Activated CD8-positive, alpha-beta memory T cell treated with anti-CD3 and anti-CD28 coated beads, Interleukin-2, amount 10 ng/mL, durations not matched to agents 7 days and 5 days (primary cell): ENCODE measurements at regions of chr14 and their contacts with region 1.

Region 1: DNA sequence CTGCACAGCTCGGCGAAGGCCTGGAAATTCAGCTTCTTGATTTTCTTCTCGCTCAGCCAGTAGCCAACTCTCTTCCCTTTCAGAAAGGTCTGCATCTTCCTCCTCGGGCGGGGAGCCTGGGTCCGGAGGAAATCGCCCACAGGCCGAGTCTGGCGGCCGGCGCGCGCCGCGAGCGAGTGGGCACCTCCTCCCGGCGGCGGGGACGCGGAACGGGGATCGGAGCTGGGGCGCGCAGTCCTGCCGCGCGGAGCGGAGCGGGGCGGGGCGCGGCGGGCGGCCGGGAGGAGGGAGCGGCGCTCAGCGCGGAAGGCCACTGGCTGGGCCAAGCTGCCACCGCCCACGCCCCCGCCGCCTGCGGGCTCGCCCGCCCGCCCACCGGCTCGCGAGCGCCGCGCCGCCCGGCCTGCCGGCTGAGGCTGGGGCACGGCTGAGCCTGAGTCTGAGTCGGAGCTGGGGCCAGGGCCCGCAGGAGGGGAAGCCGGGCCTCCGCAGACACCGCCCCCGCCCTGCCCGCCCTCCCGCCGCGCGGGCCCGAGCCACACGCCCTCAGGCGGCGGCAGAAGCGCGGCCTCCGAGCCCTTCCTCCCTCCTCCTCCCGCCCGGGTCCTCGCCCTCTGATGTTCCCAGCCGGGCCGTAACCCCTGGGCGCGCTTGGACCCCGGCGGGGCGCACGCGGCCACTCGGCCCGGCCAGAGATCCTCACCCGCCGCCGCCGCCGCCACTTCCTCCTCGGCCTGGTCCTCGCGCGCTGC is 480 bp downstream of the ITPK1 start:
- DNase-seq: peak; percentile 88
- ATAC-seq: peak; percentile 79
- H3K4me3 Mint-ChIP-seq: peak overlapping the region; percentile 86
- H3K27ac Mint-ChIP-seq: peak overlapping the region; percentile 92
- H3K4me1 Mint-ChIP-seq: peaks cover 35% of the 10 kb centered on the region
- H3K27me3 Mint-ChIP-seq: no peaks in the 10 kb centered on the region

Region 2: DNA sequence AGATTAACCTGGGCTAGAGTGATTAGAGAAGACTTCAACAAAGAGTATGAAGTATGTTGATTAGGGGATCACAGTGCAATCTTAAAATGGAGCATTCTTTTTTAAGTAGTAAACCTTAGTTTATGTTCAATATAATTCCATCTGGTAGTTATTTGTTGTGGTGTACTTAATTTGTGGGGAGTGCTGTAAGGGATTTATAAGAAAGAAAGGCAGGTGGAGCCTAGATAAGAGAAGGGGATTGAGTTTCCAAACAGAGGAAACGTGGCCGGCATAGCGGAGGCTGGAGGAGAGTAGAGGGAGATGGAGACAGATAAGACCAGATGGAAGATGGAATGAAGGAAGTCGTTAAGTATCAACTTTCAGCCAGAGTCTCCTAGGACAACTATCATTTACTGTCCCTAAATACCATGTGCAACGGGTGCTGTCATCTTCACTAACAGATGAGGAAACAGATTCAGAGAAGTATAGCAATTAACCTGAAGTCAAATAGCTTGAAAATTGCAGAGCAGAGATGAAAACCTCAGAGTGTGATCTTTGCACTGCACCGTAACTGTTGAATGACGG is 283.0 kb before region 1 on chr14:
- CTCF ChIA-PET with region 1: no interaction called
- DNase-seq: no peak
- ATAC-seq: no peak
- H3K4me3 Mint-ChIP-seq: no peak overlapping the region
- H3K27ac Mint-ChIP-seq: no peak overlapping the region
- H3K4me1 Mint-ChIP-seq: no peaks in the 10 kb centered on the region
- H3K27me3 Mint-ChIP-seq: no peaks in the 10 kb centered on the region

Region 3: GRCh38 chr14:92951912-92952471 is 163.3 kb before region 1 on chr14:
- CTCF ChIA-PET with region 1: interaction called, 21 read pairs
- DNase-seq: peak; percentile 86
- ATAC-seq: peak; percentile 95
- H3K4me3 Mint-ChIP-seq: no peak overlapping the region
- H3K27ac Mint-ChIP-seq: peak overlapping the region; percentile 60
- H3K4me1 Mint-ChIP-seq: peaks cover 7% of the 10 kb centered on the region
- H3K27me3 Mint-ChIP-seq: no peaks in the 10 kb centered on the region

Region 4: DNA sequence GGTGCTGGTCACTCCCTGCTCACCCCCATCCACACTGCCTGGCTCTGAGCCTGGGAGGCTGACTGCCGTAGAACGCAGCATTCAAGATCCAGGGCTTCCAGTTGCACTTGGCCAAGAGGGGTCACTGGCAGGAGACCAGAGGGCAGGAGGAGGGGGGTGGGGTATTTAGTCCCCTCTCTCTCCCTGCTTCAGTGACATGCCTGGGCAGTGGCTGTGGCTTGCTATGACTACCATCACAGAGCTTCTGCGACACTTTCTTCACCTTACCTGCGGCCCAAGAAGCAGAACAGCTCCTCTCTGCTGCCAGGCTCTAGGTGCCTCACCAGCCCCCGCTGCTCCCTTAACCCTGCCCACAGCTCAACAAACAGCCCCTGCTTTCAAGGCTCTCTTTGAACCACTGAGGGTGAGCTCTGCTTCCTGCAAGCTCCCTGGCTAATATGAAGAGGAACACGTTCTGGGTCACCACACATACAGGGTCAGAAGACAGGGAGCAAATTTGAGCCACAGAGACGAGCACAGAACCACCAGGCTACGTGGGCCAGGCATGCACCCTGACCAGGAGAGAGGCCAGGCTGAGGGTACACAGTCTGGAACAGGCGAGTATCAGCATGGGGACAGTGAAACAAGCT is 55.2 kb before region 1 on chr14:
- CTCF ChIA-PET with region 1: interaction called, 40 read pairs
- DNase-seq: peak; percentile 57
- ATAC-seq: peak; percentile 59
- H3K4me3 Mint-ChIP-seq: peak overlapping the region; percentile 1
- H3K27ac Mint-ChIP-seq: peak overlapping the region; percentile 81
- H3K4me1 Mint-ChIP-seq: peaks cover 53% of the 10 kb centered on the region
- H3K27me3 Mint-ChIP-seq: no peaks in the 10 kb centered on the region

Region 5: GRCh38 chr14:93086441-93087055 is 28.7 kb before region 1 on chr14:
- CTCF ChIA-PET with region 1: interaction called, 24 read pairs
- DNase-seq: peak; percentile 68
- ATAC-seq: peak; percentile 65
- H3K4me3 Mint-ChIP-seq: no peak overlapping the region
- H3K27ac Mint-ChIP-seq: peak overlapping the region; percentile 79
- H3K4me1 Mint-ChIP-seq: peaks cover 63% of the 10 kb centered on the region
- H3K27me3 Mint-ChIP-seq: no peaks in the 10 kb centered on the region

Region 6: GRCh38 chr14:93132470-93133065 is 17.3 kb after region 1 on chr14:
- CTCF ChIA-PET with region 1: interaction called, 269 read pairs
- DNase-seq: peak; percentile 50
- ATAC-seq: peak; percentile 57
- H3K4me3 Mint-ChIP-seq: no peak overlapping the region
- H3K27ac Mint-ChIP-seq: no peak overlapping the region
- H3K4me1 Mint-ChIP-seq: no peaks in the 10 kb centered on the region
- H3K27me3 Mint-ChIP-seq: peaks cover 12% of the 10 kb centered on the region

Region 7: DNA sequence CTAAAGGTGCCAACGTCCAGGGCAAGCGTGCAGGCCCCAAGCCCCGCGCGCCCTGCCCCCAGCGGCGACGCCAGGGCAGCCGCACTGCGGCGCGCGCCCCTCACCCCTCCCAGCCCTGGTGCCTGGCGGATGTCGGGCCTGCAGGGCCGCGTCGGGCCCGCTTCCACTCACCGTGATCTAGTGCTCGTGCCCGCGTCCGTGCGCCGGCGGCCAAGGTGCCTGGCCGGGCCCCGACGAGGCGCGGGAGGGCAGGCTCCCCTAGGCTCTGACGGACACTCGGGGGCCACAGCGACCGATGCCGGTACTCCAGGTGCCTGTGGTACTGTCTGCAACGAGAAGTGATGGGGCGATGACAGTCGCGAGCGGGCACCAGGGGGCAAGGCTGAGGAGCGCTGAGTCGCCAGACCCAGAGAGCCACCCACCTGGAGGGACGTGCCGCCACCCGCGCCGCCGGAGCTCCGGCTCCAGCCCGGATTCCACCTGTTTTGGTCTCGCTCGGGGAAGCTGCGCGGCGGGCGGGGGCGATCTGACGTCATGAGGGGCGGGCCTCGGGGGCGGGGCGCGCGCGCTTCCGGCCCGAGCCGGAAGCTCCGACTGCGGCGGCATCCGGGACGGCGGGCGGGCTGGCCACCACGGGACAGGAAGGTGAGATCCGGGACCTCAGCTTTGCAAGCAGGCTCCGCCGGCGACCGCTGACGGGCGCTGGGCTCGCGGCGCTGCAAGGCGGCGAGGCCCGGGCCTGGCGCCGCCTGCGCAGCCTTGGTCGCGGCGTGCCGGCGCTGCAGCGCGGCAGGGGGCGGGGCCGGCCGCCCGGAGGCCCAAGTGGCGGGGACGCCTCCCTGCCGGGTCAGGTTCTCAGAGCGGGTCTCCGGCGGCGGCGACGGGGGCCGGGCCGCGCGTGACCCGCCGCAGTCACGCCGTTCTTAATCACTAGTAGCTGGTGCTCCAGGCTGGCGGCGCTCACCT is 69.4 kb after region 1 on chr14 and contains the starts of genes LYSET and MOAP1:
- CTCF ChIA-PET with region 1: interaction called, 17 read pairs
- DNase-seq: peak; percentile 95
- ATAC-seq: peak; percentile 90
- H3K4me3 Mint-ChIP-seq: peak within 1 kb of the TSS; percentile 90
- H3K27ac Mint-ChIP-seq: peak within 1 kb of the TSS; percentile 94
- H3K4me1 Mint-ChIP-seq: peaks cover 31% of the 10 kb centered on the region
- H3K27me3 Mint-ChIP-seq: no peaks in the 10 kb centered on the region
- total RNA-seq, gene LYSET: 6.3 to 9.7 TPM
- total RNA-seq, gene MOAP1: 18.2 to 19.5 TPM

Region 8: DNA sequence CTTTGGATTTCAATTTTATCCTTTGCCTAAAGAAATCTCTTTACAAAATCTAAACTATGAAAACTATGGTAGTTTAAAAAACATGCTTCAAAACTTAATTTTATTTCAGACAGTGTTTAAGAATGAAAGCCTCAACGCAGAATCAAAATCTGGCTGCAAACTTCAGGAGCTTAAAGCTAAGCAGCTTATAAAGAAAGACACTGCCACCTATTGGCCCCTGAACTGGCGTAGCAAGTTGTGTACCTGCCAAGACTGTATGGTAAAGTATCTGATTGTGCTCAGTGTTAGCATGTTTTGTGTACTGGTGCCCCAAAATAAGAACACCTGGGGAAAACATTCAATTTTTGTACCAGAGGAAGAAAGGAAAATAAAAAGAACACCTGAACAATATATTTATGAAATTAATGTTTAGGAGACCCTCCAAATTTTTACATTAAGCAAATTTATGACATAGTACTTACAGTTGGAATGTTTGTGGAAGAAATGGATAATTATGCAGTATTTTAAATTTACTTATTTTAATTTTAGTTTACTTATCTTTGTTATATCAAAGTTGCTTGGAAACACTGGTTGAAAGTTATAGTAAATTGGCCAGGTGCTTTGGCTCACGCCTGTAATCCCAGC is 104.0 kb after region 1 on chr14:
- CTCF ChIA-PET with region 1: interaction called, 18 read pairs
- DNase-seq: peak; percentile 67
- ATAC-seq: peak; percentile 91
- H3K4me3 Mint-ChIP-seq: no peak overlapping the region
- H3K27ac Mint-ChIP-seq: no peak overlapping the region
- H3K4me1 Mint-ChIP-seq: peaks cover 8% of the 10 kb centered on the region
- H3K27me3 Mint-ChIP-seq: no peaks in the 10 kb centered on the region

Region 9: GRCh38 chr14:93301821-93302447 is 186.7 kb after region 1 on chr14:
- CTCF ChIA-PET with region 1: no interaction called
- DNase-seq: no peak
- ATAC-seq: no peak
- H3K4me3 Mint-ChIP-seq: no peak overlapping the region
- H3K27ac Mint-ChIP-seq: no peak overlapping the region
- H3K4me1 Mint-ChIP-seq: peaks cover 3% of the 10 kb centered on the region
- H3K27me3 Mint-ChIP-seq: no peaks in the 10 kb centered on the region